ENCODE measurements at regions of chr2 and their contacts with region 1.

Region 1: GRCh38 chr2:231604685-231605606 is 12.3 kb downstream of the TEX44 start:
- DNase-seq: peak; percentile 99
- ATAC-seq: peak; percentile 75
- H3K4me3 Mint-ChIP-seq: peak overlapping the region; percentile 61
- H3K27ac Mint-ChIP-seq: peak overlapping the region; percentile 94
- H3K4me1 Mint-ChIP-seq: peaks cover 30% of the 10 kb centered on the region
- H3K27me3 Mint-ChIP-seq: no peaks in the 10 kb centered on the region
- CTCF ChIP-seq: no peak

Region 2: GRCh38 chr2:231514103-231514950 is 90.6 kb before region 1 on chr2:
- CTCF ChIA-PET with region 1: interaction called, 12 read pairs
- POLR2A ChIA-PET with region 1: no interaction called
- DNase-seq: peak; percentile 97
- ATAC-seq: peak; percentile 98
- H3K4me3 Mint-ChIP-seq: peak overlapping the region; percentile 90
- H3K27ac Mint-ChIP-seq: peak overlapping the region; percentile 99
- H3K4me1 Mint-ChIP-seq: peaks cover 22% of the 10 kb centered on the region
- H3K27me3 Mint-ChIP-seq: peaks cover 11% of the 10 kb centered on the region
- CTCF ChIP-seq: no peak

Region 3: DNA sequence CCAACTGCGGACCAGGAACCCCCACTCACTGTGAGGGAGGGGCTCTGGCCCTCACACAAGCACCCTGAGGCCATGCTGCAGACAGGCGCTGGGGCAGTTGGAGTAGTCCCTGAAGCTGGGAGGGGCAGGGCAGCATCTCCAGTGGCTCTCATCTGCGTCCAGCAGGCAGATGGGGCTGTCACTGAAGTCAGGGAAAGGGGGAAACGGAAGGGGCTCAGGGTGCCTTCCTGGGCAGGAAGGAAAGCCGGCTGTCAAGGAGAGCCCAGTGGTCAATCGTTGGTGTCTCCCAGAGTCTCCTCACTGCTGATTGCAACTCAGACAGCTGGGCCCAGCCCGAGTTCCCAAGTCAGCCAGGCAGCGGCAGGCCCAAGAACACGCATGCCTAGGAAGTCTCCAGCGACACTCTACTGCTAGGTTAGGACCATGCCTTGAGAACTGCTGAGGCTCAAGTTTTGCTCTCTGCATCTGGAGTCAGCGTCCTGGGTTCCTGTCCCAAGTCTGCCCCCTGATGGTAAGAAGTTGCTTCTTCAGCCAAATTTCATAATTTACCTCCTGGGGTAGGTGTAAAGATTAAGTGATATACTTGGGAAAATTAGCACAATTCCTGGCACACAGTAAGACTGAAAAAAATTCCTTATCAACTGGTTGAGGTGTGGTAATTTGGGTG is 47.2 kb before region 1 on chr2:
- CTCF ChIA-PET with region 1: interaction called, 142 read pairs
- POLR2A ChIA-PET with region 1: no interaction called
- DNase-seq: peak; percentile 52
- ATAC-seq: peak; percentile 97
- H3K4me3 Mint-ChIP-seq: no peak overlapping the region
- H3K27ac Mint-ChIP-seq: no peak overlapping the region
- H3K4me1 Mint-ChIP-seq: peaks cover 7% of the 10 kb centered on the region
- H3K27me3 Mint-ChIP-seq: peaks cover 3% of the 10 kb centered on the region; the same call in 1 of the 2 replicates
- CTCF ChIP-seq: peak; percentile 44; the same call in 1 of the 2 replicates

Region 4: DNA sequence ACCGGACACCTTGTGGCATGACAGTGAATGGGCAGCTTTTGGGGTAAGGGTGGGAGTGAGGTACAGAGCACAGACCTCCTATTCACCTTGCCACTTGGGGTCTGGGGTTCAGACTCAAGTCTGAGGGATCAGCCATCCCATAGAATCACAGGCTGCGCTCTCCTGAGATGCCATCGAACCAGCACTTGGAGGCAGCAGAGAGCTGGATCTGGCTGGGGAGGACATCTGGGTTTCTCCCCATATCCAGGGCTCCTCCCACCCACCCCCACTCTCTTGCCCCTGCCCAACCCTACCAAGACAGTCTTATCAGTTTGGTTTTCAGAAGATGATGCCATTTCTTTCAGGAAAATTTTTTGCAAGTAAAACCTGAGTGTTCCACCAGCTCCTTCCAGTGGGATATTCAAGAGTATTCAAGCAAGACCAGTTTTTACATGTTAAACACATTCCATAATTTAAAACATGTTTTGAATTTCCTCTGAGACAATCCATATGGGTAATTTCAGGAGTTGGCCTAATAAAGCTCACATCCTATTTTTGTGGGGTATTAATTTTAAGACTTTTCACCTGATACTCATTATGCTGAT is 41.5 kb before region 1 on chr2:
- CTCF ChIA-PET with region 1: interaction called, 142 read pairs
- POLR2A ChIA-PET with region 1: interaction called, 4 read pairs
- DNase-seq: peak; percentile 82
- ATAC-seq: peak; percentile 99
- H3K4me3 Mint-ChIP-seq: no peak overlapping the region
- H3K27ac Mint-ChIP-seq: peak overlapping the region; percentile 66; the same call in 1 of the 2 replicates
- H3K4me1 Mint-ChIP-seq: peaks cover 11% of the 10 kb centered on the region
- H3K27me3 Mint-ChIP-seq: no peaks in the 10 kb centered on the region
- CTCF ChIP-seq: peak; percentile 54; the same call in 1 of the 2 replicates

Region 5: DNA sequence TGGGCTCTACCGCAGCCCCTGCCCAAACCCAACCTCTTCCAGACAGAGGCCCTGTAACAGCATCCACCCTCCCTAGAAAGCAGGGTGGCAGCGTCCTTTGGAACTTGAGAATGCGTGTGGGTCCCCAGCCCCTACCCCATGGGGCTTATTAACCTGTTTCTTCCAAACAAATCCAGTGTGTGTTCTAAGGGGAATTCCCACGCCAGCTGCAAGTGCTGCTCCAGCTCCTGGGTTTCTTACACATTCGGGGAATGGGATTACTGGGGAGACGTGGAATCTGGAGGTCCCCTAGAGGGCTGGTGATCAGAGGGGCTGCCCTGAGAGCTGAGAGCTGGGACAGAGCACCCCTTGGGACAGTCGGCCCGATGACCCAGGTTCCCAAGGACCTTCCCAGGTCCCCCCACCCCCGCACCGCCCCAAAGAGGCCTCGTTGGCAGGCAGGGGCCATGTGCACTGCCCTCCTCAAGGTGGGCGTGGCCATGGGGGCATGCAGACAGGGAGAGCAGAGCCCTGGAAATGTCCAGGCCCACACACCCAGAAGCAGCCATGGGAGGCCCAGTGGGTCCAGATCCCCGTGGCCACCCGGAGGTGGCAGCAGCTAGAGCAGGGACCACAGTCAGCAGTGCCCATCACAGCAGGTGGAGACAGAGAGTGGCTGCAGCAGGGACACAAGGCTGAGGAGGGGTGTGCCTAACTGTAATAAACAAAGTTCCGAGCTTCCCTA is 31.1 kb before region 1 on chr2:
- CTCF ChIA-PET with region 1: interaction called, 142 read pairs
- POLR2A ChIA-PET with region 1: interaction called, 3 read pairs
- DNase-seq: no peak
- ATAC-seq: peak; percentile 11
- H3K4me3 Mint-ChIP-seq: no peak overlapping the region
- H3K27ac Mint-ChIP-seq: peak overlapping the region; percentile 88
- H3K4me1 Mint-ChIP-seq: peaks cover 60% of the 10 kb centered on the region
- H3K27me3 Mint-ChIP-seq: no peaks in the 10 kb centered on the region
- CTCF ChIP-seq: no peak

Region 6: GRCh38 chr2:231590619-231591018 is 14.3 kb before region 1 on chr2:
- CTCF ChIA-PET with region 1: interaction called, 32 read pairs
- POLR2A ChIA-PET with region 1: interaction called, 5 read pairs
- DNase-seq: no peak
- ATAC-seq: peak; percentile 83
- H3K4me3 Mint-ChIP-seq: no peak overlapping the region
- H3K27ac Mint-ChIP-seq: no peak overlapping the region
- H3K4me1 Mint-ChIP-seq: peaks cover 8% of the 10 kb centered on the region
- H3K27me3 Mint-ChIP-seq: no peaks in the 10 kb centered on the region; the same call in 1 of the 2 replicates
- CTCF ChIP-seq: no peak

Region 7: DNA sequence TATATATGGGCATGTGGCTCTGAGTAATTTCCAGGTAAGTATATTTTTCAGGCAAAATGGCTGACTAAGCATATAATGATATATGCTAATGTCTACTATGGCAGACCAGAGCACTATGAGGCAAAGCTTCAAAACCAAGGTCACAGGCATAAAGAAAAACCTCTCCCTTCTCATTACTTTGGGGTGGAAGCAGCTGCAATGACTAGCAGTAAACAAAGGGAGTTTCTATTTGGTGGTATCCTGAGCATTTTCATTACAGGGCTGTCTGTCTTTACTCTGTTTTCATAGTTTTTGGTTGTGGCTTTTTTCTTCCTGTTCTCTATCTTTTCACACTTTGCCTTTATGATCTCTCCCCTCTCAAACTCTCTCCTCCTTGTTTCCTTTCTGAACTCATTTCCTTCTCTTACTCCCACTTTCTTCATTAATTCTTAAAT is 160.6 kb after region 1 on chr2:
- CTCF ChIA-PET with region 1: no interaction called
- POLR2A ChIA-PET with region 1: no interaction called
- DNase-seq: no peak
- ATAC-seq: no peak
- H3K4me3 Mint-ChIP-seq: no peak overlapping the region
- H3K27ac Mint-ChIP-seq: no peak overlapping the region
- H3K4me1 Mint-ChIP-seq: peaks cover 9% of the 10 kb centered on the region
- H3K27me3 Mint-ChIP-seq: no peaks in the 10 kb centered on the region
- CTCF ChIP-seq: no peak